Activated CD8-positive, alpha-beta T cell treated with anti-CD3 and anti-CD28 coated beads for 36 hours (primary cell): ENCODE measurements at regions of chr3 and their contacts with region 1.

Region 1: DNA sequence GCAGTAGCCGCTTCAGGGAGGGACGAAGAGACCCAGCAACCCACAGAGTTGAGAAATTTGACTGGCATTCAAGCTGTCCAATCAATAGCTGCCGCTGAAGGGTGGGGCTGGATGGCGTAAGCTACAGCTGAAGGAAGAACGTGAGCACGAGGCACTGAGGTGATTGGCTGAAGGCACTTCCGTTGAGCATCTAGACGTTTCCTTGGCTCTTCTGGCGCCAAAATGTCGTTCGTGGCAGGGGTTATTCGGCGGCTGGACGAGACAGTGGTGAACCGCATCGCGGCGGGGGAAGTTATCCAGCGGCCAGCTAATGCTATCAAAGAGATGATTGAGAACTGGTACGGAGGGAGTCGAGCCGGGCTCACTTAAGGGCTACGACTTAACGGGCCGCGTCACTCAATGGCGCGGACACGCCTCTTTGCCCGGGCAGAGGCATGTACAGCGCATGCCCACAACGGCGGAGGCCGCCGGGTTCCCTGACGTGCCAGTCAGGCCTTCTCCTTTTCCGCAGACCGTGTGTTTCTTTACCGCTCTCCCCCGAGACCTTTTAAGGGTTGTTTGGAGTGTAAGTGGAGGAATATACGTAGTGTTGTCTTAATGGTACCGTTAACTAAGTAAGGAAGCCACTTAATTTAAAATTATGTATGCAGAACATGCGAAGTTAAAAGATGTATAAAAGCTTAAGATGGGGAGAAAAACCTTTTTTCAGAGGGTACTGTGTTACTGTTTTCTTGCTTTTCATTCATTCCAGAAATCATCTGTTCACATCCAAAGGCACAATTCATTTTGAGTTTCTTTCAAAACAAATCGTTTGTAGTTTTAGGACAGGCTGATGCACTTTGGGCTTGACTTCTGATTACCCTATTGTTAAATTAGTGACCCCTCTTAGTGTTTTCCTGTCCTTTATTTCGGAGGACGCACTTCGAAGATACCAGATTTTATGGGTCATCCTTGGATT is at the start of gene MLH1:
- DNase-seq: peak; percentile 100
- ATAC-seq: peak; percentile 90
- H3K4me3 Mint-ChIP-seq: no peak within 1 kb of the TSS
- H3K27ac Mint-ChIP-seq: no peak within 1 kb of the TSS
- H3K4me1 Mint-ChIP-seq: peaks cover 43% of the 10 kb centered on the region
- H3K27me3 Mint-ChIP-seq: no peaks in the 10 kb centered on the region
- CTCF ChIP-seq: no peak
- total RNA-seq, gene MLH1: 89.6 to 93.7 TPM

Region 2: DNA sequence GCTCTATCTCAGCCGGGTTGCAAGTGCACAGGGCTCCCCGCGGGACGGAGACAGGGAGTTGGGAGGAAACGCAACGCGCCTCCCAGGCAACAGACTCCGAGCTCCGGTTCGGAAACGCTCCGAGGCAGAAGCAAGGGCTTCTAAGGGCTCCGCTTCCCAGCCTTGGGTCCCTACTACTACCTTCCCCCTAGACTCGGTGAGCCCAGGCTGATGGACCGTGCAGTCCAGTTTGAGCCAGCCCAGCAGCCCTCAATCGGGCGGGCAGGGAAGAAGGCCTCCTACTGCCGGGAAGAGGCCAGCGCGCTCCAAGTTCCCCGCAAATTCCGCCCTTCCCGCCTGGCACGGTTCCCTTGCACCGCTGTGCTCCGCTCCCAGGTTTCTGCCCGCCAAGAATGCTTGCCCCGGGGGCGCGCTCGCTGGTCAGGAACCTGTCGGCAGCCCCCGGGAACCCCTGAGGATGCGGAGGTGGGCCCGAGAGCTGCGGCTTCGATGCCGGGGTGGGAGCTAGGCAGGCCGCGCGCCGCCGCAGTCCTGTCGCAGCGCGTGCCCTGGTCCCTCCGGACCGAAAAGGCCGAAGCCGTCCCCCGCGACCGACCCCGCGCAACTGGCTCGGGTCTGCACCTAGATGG is 49.5 kb before region 1 on chr3:
- CTCF ChIA-PET with region 1: no interaction called
- POLR2A ChIA-PET with region 1: interaction called, 20 read pairs
- intact Hi-C with region 1: no loop called
- DNase-seq: peak; percentile 52
- ATAC-seq: peak; percentile 59
- H3K4me3 Mint-ChIP-seq: peak overlapping the region; percentile 77
- H3K27ac Mint-ChIP-seq: peak overlapping the region; percentile 57
- H3K4me1 Mint-ChIP-seq: peaks cover 26% of the 10 kb centered on the region
- H3K27me3 Mint-ChIP-seq: no peaks in the 10 kb centered on the region
- CTCF ChIP-seq: no peak

Region 3: GRCh38 chr3:37190667-37191066 is 197.1 kb after region 1 on chr3:
- CTCF ChIA-PET with region 1: no interaction called
- POLR2A ChIA-PET with region 1: no interaction called
- intact Hi-C with region 1: no loop called
- DNase-seq: no peak
- ATAC-seq: no peak
- H3K4me3 Mint-ChIP-seq: no peak overlapping the region
- H3K27ac Mint-ChIP-seq: no peak overlapping the region
- H3K4me1 Mint-ChIP-seq: no peaks in the 10 kb centered on the region
- H3K27me3 Mint-ChIP-seq: no peaks in the 10 kb centered on the region
- CTCF ChIP-seq: no peak

Region 4: DNA sequence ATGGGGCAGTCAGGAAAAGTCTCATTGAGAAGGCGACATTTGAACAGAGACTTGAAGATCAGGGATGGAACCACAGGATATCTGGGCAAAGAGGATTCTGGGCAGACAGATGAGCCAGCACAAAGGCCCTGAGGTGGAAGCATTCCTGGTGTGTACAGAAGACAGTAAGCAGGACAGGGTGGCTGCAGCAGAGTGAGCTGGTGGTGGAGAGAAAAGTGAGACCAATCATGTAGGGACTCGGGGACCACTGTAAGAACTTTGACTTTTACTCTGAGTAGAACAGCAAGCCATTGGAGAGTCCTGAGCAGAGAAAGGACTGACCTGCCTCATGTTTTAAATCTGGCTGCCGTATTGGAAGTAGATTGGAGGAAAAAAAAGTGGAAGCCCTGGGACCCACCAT is 210.7 kb after region 1 on chr3:
- CTCF ChIA-PET with region 1: no interaction called
- POLR2A ChIA-PET with region 1: no interaction called
- intact Hi-C with region 1: no loop called
- DNase-seq: no peak
- ATAC-seq: no peak
- H3K4me3 Mint-ChIP-seq: no peak overlapping the region
- H3K27ac Mint-ChIP-seq: no peak overlapping the region
- H3K4me1 Mint-ChIP-seq: no peaks in the 10 kb centered on the region
- H3K27me3 Mint-ChIP-seq: no peaks in the 10 kb centered on the region
- CTCF ChIP-seq: no peak

Region 5: GRCh38 chr3:37441689-37442088 is 448.1 kb after region 1 on chr3:
- CTCF ChIA-PET with region 1: no interaction called
- POLR2A ChIA-PET with region 1: no interaction called
- intact Hi-C with region 1: no loop called
- DNase-seq: no peak
- ATAC-seq: no peak
- H3K4me3 Mint-ChIP-seq: no peak overlapping the region
- H3K27ac Mint-ChIP-seq: no peak overlapping the region
- H3K4me1 Mint-ChIP-seq: no peaks in the 10 kb centered on the region
- H3K27me3 Mint-ChIP-seq: peaks cover 5% of the 10 kb centered on the region
- CTCF ChIP-seq: no peak